Activated CD8-positive, alpha-beta T cell treated with anti-CD3 and anti-CD28 coated beads, Interleukin-2, amount 10 ng/mL, durations not matched to agents 7 days and 5 days (primary cell): ENCODE measurements at regions of chr6 and their contacts with region 1.

Region 1: GRCh38 chr6:90940812-90941481 is 354.1 kb upstream of the MAP3K7 start:
- DNase-seq: peak; percentile 26
- ATAC-seq: peak; percentile 92
- H3K4me3 Mint-ChIP-seq: peak overlapping the region; percentile 13
- H3K27ac Mint-ChIP-seq: peak overlapping the region; percentile 31
- H3K4me1 Mint-ChIP-seq: peaks cover 8% of the 10 kb centered on the region
- H3K27me3 Mint-ChIP-seq: peaks cover 4% of the 10 kb centered on the region

Region 2: DNA sequence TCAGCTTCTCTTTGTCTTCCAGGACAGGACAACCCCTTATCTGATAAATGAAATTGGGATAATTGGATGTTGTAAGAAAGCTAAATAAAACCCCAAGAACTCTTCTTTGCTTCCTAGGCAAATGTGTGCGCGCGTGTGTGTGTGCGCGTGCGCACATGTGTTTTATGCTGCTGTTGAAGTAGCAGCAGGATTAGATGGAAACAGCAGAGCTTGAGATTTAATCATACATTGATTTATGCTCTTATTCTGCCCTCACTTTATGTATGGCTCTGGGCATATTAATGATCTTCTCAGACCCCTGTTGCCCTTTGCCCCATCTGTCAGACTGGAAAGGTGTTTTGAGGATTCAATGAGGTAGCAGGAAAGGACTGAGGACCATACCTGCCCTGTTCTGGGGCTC is 30.1 kb before region 1 on chr6:
- CTCF ChIA-PET with region 1: interaction called, 11 read pairs
- POLR2A ChIA-PET with region 1: no interaction called
- DNase-seq: no peak
- ATAC-seq: no peak
- H3K4me3 Mint-ChIP-seq: no peak overlapping the region
- H3K27ac Mint-ChIP-seq: no peak overlapping the region
- H3K4me1 Mint-ChIP-seq: no peaks in the 10 kb centered on the region
- H3K27me3 Mint-ChIP-seq: peaks cover 2% of the 10 kb centered on the region

Region 3: GRCh38 chr6:90928051-90928450 is 12.9 kb before region 1 on chr6:
- CTCF ChIA-PET with region 1: interaction called, 11 read pairs
- POLR2A ChIA-PET with region 1: no interaction called
- DNase-seq: no peak
- ATAC-seq: no peak
- H3K4me3 Mint-ChIP-seq: no peak overlapping the region
- H3K27ac Mint-ChIP-seq: no peak overlapping the region
- H3K4me1 Mint-ChIP-seq: no peaks in the 10 kb centered on the region
- H3K27me3 Mint-ChIP-seq: peaks cover 28% of the 10 kb centered on the region

Region 4: GRCh38 chr6:90978046-90978445 is 37.1 kb after region 1 on chr6:
- CTCF ChIA-PET with region 1: no interaction called
- POLR2A ChIA-PET with region 1: no interaction called
- DNase-seq: no peak
- ATAC-seq: no peak
- H3K4me3 Mint-ChIP-seq: no peak overlapping the region
- H3K27ac Mint-ChIP-seq: no peak overlapping the region
- H3K4me1 Mint-ChIP-seq: no peaks in the 10 kb centered on the region
- H3K27me3 Mint-ChIP-seq: no peaks in the 10 kb centered on the region

Region 5: DNA sequence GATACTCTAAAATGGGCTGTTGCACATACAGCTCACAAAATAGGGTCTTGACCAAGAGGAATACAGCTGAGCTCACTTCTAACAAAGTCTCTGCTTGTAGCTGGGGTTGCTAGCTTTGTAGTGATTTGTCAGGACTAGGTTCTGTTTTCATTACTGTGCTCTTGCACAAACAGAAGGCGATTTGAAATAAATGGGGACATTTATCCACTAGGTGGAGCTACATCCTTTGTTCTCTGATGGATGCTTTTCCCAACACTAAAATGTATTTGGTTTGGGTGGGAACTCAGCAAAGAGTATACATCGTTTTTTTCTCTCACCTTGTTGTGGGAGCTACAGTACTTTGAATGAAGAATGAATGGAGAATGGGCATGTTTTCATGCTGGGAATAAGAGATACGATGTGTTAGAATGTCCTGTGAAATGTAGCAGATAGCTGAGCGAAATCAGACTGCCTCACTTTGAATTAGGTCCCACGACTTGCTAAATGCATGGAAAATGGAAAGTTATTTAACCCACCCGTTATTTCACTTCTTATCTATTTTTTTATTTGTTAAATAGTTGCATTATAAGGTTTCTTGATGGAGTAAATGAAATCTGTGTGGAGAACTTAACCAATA is 140.6 kb after region 1 on chr6:
- CTCF ChIA-PET with region 1: interaction called, 15 read pairs
- POLR2A ChIA-PET with region 1: no interaction called
- DNase-seq: no peak
- ATAC-seq: no peak
- H3K4me3 Mint-ChIP-seq: no peak overlapping the region
- H3K27ac Mint-ChIP-seq: no peak overlapping the region
- H3K4me1 Mint-ChIP-seq: no peaks in the 10 kb centered on the region
- H3K27me3 Mint-ChIP-seq: no peaks in the 10 kb centered on the region